A673 (cell line): ENCODE measurements at regions of chr7 and their contacts with region 1.

Region 1: DNA sequence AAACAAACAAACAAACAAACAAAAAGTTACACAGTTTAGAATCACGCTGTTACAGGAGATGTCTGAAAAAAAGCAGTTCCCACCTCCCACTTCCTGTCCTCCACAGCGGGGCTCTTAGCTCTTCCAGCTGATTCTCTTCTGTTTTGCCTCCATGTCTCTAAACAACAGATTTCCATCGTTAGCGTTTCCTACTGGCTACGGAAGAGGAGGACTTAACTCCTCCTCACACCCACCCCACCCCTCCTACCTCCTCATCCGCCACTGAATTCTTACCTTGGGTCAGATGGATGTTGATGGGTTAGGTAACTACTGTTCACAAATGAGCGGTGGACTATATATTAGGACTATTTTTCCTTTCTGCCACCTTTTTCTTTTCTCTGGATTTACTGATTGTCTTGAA is 36.8 kb upstream of the NUB1 start:
- DNase-seq: peak; percentile 56
- H3K4me3 ChIP-seq: no peak overlapping the region
- H3K27ac ChIP-seq: no peak overlapping the region
- H3K4me1 ChIP-seq: no peaks in the 10 kb centered on the region
- H3K27me3 ChIP-seq: no peaks in the 10 kb centered on the region
- CTCF ChIP-seq: no peak

Region 2: DNA sequence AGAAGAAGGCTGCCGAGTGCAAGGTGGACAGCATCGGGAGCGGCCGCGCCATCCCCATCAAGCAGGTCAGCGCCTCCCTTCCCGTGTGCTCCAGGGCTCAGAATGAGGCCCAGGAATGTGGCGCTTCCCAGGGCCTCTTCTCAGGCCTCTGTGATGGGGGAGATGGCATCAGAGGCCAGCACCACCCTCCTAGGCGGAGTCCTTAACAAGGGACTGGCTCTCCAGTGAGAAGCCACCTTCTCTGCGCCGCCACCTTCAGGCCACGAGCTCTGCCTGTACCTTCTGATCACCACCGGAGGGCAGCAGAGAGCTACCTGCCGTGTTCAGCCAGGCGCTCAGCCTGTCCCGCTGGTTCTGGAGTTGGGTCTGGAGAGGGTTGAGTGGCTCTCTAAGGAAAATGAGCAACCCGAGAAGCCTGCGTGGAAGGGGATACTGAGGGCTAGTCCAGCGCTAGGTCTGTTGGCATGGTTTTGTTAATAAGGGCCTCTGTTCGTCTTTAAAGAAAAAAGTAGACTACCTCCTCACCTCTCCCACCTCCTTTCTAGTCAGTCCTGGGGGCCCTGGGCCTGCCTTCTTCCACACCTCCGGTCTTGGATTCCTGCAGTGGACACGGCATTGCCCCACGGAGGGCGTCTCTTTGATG is 180.9 kb before region 1 on chr7:
- CTCF ChIA-PET with region 1: interaction called, 17 read pairs
- POLR2A ChIA-PET with region 1: no interaction called
- intact Hi-C with region 1: loop called (anchors 2 kb)
- DNase-seq: peak; percentile 85
- H3K4me3 ChIP-seq: no peak overlapping the region
- H3K27ac ChIP-seq: no peak overlapping the region
- H3K4me1 ChIP-seq: peaks cover 11% of the 10 kb centered on the region
- H3K27me3 ChIP-seq: no peaks in the 10 kb centered on the region
- CTCF ChIP-seq: peak; percentile 99

Region 3: GRCh38 chr7:151172273-151173141 is 132.3 kb before region 1 on chr7:
- CTCF ChIA-PET with region 1: no interaction called
- POLR2A ChIA-PET with region 1: no interaction called
- intact Hi-C with region 1: loop called (anchors 1 kb)
- DNase-seq: peak; percentile 79
- H3K4me3 ChIP-seq: no peak overlapping the region
- H3K27ac ChIP-seq: no peak overlapping the region
- H3K4me1 ChIP-seq: peaks cover 4% of the 10 kb centered on the region
- H3K27me3 ChIP-seq: peaks cover 27% of the 10 kb centered on the region
- CTCF ChIP-seq: peak; percentile 100

Region 4: DNA sequence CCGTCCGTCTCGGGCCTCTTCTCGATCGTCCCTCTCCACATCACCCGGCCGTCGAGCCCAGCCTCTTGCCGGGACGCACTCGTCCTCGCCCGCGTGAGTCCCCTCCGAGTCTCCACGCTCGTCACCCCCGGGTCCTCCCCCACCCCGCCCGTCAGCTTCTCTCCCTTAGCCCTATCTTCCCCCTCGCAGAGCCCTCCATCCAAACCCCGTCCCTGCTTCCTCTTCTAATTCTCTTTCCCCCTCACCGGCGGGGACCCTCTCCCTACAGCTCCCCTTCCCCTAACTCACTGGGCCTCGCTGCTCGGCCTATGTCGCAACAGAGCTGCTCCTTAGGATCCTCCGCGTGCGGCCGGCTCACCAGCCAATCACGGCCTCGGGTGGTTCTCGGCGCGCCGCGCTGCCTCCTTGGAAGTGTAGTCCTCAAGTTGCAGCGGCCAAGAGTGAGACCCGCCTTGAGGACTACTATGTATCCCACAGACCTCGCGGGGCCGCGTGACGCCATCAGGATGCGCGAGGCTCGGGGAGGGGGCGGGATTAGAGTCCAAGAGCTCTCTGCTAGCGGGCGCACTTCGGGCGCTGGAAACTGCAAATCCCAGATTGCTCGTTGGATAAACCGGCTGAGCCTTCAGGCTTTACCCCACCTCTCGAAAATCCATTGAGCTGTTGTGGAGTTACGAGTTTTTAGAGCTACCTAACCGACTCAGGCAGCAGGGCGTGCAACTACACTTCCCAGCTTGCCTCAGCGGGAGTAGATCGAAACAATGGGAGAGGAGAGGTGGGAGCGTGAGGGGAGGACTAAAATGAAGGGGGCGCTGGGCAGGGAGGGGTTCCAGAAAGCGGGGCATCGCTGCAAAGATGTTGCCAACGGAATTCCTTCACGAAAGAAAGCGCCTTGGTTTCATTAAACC is 77.7 kb before region 1 on chr7 and contains the start of gene ABCF2:
- CTCF ChIA-PET with region 1: no interaction called
- POLR2A ChIA-PET with region 1: no interaction called
- intact Hi-C with region 1: loop called (anchors 1 kb)
- DNase-seq: peak; percentile 100
- H3K4me3 ChIP-seq: peak within 1 kb of the TSS; percentile 81
- H3K27ac ChIP-seq: peak within 1 kb of the TSS; percentile 74
- H3K4me1 ChIP-seq: peaks cover 12% of the 10 kb centered on the region
- H3K27me3 ChIP-seq: no peaks in the 10 kb centered on the region
- CTCF ChIP-seq: no peak
- total RNA-seq, gene ABCF2: 65.5 and 69.0 TPM in 2 replicates

Region 5: GRCh38 chr7:151248346-151249033 is 56.4 kb before region 1 on chr7 and contains the start of gene SMARCD3:
- CTCF ChIA-PET with region 1: no interaction called
- POLR2A ChIA-PET with region 1: no interaction called
- intact Hi-C with region 1: loop called (anchors 2 kb)
- DNase-seq: peak; percentile 85
- H3K4me3 ChIP-seq: peak within 1 kb of the TSS; percentile 68
- H3K27ac ChIP-seq: peak within 1 kb of the TSS; percentile 80
- H3K4me1 ChIP-seq: peaks cover 75% of the 10 kb centered on the region
- H3K27me3 ChIP-seq: no peaks in the 10 kb centered on the region
- CTCF ChIP-seq: no peak
- total RNA-seq, gene SMARCD3: 44.8 and 52.1 TPM in 2 replicates